Keratinocyte (primary cell): ENCODE measurements at regions of chr20 and their contacts with region 1.

Region 1: DNA sequence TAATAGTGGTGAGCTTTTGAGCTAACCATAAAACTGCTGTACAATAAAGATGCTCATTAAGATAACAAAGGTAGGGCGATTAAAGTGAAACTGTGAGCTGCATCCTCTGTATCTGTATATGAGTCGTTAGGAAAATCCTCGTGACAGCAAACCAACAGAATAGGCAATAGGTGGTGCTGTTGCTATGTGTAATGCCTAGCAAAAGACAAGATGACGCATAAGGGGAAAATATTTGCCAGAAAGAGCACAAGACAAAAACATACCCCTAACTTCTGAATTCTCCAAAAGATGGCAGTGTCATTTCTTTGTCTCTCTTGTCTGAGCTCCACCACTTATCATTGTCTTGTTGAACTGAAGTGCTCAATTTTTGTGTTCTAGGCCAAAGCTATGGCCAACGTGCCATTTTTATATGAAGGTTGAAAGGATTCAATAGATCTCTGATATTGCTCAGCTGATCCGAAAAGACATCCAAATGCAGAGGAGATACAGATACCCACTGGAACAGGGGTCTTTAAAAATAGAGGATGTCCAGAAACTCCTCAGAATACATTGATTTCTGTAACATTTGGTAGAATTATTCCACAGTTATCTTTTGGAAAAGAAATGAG is 56.3 kb upstream of the ANKEF1 start:
- DNase-seq: peak; percentile 19
- H3K4me3 ChIP-seq: peak overlapping the region in 1 of 3 experiments; percentile 45
- H3K27ac ChIP-seq: no peak overlapping the region
- H3K4me1 ChIP-seq: peaks cover 9% of the 10 kb centered on the region
- H3K27me3 ChIP-seq: no peaks in the 10 kb centered on the region
- CTCF ChIP-seq: peak; percentile 62 to 81 (median 64)

Region 2: DNA sequence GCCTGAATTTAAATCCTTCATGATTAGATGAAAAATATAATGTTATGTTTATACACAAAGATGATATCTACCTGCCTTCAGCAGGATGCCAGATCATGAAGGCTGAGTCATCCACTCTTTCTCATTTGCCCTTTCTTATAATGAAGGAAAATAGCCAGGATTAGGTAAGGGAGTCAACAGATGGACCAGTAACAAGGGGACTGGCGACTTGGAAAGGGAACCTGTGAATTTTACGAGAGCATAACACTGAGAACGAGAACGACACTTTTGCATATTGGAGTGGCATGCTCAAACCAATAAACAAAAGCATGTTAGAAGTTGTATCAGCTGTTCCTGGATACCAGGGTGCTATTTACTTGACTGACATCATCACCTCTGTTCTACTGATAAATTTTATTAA is 310.1 kb before region 1 on chr20:
- dilution Hi-C with region 1: no loop called
- DNase-seq: no peak
- H3K4me3 ChIP-seq: no peak overlapping the region
- H3K27ac ChIP-seq: no peak overlapping the region
- H3K4me1 ChIP-seq: no peaks in the 10 kb centered on the region
- H3K27me3 ChIP-seq: no peaks in the 10 kb centered on the region
- CTCF ChIP-seq: no peak

Region 3: DNA sequence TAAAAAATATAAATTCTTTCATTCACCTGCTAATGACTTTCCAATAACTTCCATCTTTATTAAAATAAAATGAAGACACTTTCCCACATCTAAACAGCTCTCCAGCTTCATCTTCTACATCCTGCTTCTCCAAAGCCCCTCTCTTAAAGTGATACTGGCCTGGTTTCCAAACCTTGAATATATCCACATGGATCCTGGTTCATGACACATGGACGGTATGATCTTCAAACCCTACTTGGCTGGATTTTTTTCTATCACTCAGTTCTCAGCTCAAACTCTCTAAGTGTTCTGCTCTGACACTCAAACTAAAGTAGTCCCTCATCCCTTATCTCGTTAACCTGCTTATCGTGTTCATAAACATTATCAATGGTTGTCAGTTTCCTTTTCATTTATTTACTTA is 267.8 kb before region 1 on chr20:
- dilution Hi-C with region 1: no loop called
- DNase-seq: no peak
- H3K4me3 ChIP-seq: no peak overlapping the region
- H3K27ac ChIP-seq: no peak overlapping the region
- H3K4me1 ChIP-seq: no peaks in the 10 kb centered on the region
- H3K27me3 ChIP-seq: no peaks in the 10 kb centered on the region
- CTCF ChIP-seq: no peak

Region 4: DNA sequence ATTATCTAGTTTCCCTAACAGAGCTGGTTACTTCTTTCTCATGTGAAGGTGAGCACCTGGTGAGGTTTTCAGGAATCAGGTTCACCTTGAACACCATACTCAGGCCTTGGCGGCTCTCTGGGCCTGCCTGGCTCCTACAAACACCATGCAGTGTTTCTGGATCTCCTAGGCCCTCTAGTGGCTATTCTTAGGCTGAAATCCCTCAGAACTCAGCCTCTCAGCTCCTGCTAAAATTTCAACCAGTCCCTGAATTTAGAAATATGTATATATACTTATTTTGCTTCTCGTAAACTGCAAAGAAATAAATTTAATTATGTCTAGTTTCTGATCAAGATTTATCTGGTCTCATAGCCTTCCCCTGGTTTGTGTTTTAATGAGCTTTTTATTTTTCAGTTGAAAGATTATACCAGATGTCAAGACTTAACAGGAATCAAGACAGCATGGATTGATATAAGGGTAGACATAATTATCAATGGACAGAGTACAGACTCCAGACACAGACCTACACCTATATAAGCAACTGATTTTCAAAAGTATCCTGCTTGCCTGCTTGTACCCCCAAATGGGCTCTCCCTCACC is 112.2 kb after region 1 on chr20:
- dilution Hi-C with region 1: loop called (anchors 25 kb)
- DNase-seq: no peak
- H3K4me3 ChIP-seq: no peak overlapping the region
- H3K27ac ChIP-seq: no peak overlapping the region
- H3K4me1 ChIP-seq: peaks cover 30% of the 10 kb centered on the region
- H3K27me3 ChIP-seq: no peaks in the 10 kb centered on the region
- CTCF ChIP-seq: peak; percentile 75 to 83 (median 77)